H1 (cell line): ENCODE measurements at regions of chr3 and their contacts with region 1.

Region 1: DNA sequence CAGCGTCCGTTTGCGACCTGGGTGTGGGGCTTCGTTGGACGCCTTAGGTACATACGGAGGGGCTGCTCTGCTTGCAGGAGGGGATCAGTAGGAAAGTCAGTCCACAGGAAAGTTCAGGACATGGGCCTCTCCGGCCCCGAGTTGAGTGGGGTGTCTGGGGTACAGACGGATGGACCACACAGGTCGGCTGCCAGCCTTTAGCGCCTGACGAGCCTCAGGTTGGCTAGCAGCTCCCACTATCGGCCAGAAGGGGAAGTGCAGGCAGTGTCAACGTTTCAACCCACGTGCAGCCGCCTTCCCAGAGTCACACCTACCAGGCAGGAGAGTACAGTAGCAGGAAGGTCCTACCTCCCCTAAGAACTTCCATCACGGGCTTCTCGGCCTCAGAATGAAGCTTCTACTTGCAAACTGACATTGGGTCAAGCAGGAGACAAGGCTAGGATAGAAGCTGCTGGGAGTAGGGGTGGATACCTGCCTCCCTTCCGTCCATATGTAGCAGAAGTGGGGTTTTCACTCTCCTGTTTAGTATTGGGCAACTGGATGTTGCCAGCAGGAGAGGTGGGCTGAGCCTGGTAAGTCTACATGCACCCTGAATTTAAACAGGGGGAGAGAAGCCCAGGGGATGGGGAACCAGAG is 1.8 kb upstream of the SCN5A start:
- DNase-seq: peak in 1 of 2 experiments; percentile 90
- H3K4me3 ChIP-seq: peak overlapping the region in 2 of 4 experiments; percentile 24 to 59; a peak in 5 of 8 replicates
- H3K27ac ChIP-seq: no peak overlapping the region
- H3K4me1 ChIP-seq: peaks cover 0 to 15% (median 6%) of the 10 kb centered on the region in 4 experiments; a peak in 5 of 7 replicates
- H3K27me3 ChIP-seq: peaks cover 0 to 47% (median 28%) of the 10 kb centered on the region in 4 experiments; a peak in 6 of 7 replicates
- CTCF ChIP-seq: peak; percentile 96 to 100 (median 100)
- EP300 ChIP-seq: no peak; a peak in 1 of 3 replicates
- POLR2A ChIP-seq: no peak
- RAD21 ChIP-seq: peak; percentile 91 to 96

Region 2: DNA sequence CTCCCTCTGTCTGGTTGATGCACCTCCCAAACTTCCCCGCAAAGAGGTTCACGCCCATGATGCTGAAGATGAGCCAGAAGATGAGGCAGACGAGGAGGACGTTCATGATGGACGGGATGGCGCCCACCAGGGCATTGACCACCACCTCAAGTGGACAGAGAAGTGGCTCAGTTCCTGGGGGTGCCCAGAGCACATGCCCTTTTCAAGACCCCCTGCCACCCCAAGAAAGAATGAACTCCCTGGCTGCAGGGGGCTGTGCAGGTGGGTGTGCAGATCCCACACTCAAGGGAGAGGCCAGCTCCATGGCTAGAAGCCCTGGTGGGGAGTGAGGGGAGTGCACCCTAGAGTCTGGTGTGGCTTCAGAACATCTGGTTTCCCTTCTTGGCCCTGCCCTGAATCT is 91.0 kb before region 1 on chr3:
- CTCF ChIA-PET with region 1: interaction called, 13 read pairs
- POLR2A ChIA-PET with region 1: no interaction called
- DNase-seq: no peak
- H3K4me3 ChIP-seq: no peak overlapping the region
- H3K27ac ChIP-seq: no peak overlapping the region
- H3K4me1 ChIP-seq: no peaks in the 10 kb centered on the region
- H3K27me3 ChIP-seq: no peaks in the 10 kb centered on the region
- CTCF ChIP-seq: peak in 2 of 3 experiments; percentile 32 to 37; a peak in 2 of 4 replicates
- EP300 ChIP-seq: no peak
- POLR2A ChIP-seq: no peak
- RAD21 ChIP-seq: no peak

Region 3: GRCh38 chr3:38616111-38616510 is 35.2 kb before region 1 on chr3:
- CTCF ChIA-PET with region 1: interaction called, 538 read pairs
- POLR2A ChIA-PET with region 1: no interaction called
- DNase-seq: no peak
- H3K4me3 ChIP-seq: no peak overlapping the region
- H3K27ac ChIP-seq: no peak overlapping the region
- H3K4me1 ChIP-seq: peaks cover 5 to 9% (median 5%) of the 10 kb centered on the region in 4 experiments
- H3K27me3 ChIP-seq: no peaks in the 10 kb centered on the region
- CTCF ChIP-seq: no peak
- EP300 ChIP-seq: no peak
- POLR2A ChIP-seq: no peak
- RAD21 ChIP-seq: no peak

Region 4: DNA sequence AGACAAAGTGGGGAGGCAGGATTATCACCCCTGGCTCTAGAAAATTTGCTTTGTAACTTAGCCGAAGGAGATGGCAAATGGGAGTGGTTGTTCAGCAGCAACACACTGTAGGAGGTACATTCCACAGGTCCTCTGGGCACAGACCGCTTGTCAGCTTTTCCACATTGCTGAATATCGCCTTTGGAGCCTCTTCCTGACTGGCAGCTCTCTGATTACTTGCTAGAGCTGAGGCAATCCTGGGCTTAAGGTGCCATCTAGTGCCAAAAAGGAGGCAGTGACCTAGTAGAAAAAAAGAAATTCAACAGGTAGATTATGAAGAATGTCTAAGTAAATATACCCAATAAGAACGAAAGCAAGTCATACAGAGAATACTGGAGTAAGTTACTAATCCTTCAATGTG is 11.3 kb after region 1 on chr3:
- CTCF ChIA-PET with region 1: interaction called, 506 read pairs
- POLR2A ChIA-PET with region 1: interaction called, 3 read pairs
- DNase-seq: no peak
- H3K4me3 ChIP-seq: no peak overlapping the region
- H3K27ac ChIP-seq: no peak overlapping the region
- H3K4me1 ChIP-seq: peaks cover 0 to 8% (median 4%) of the 10 kb centered on the region in 4 experiments; a peak in 5 of 7 replicates
- H3K27me3 ChIP-seq: no peaks in the 10 kb centered on the region
- CTCF ChIP-seq: peak; percentile 4 to 83 (median 83)
- EP300 ChIP-seq: no peak
- POLR2A ChIP-seq: no peak
- RAD21 ChIP-seq: peak; percentile 97 to 98

Region 5: GRCh38 chr3:38843898-38844297 is 192.6 kb after region 1 on chr3:
- CTCF ChIA-PET with region 1: interaction called, 10 read pairs
- POLR2A ChIA-PET with region 1: no interaction called
- DNase-seq: no peak
- H3K4me3 ChIP-seq: no peak overlapping the region
- H3K27ac ChIP-seq: no peak overlapping the region
- H3K4me1 ChIP-seq: no peaks in the 10 kb centered on the region
- H3K27me3 ChIP-seq: no peaks in the 10 kb centered on the region; a peak in 1 of 7 replicates
- CTCF ChIP-seq: peak in 2 of 3 experiments; percentile 48 to 51; a peak in 2 of 4 replicates
- EP300 ChIP-seq: no peak
- POLR2A ChIP-seq: no peak
- RAD21 ChIP-seq: peak; percentile 75 to 82